WTC11 (cell line): ENCODE measurements at regions of chr5 and their contacts with region 1.

Region 1: GRCh38 chr5:71475788-71476384 is 20.4 kb downstream of the BDP1 start:
- DNase-seq: no peak
- ATAC-seq: peak; percentile 87
- H3K4me3 Mint-ChIP-seq: no peak overlapping the region
- H3K27ac Mint-ChIP-seq: peak overlapping the region; percentile 31
- H3K4me1 Mint-ChIP-seq: no peaks in the 10 kb centered on the region
- H3K27me3 Mint-ChIP-seq: no peaks in the 10 kb centered on the region
- CTCF ChIP-seq: peak; percentile 51; the same call in 1 of the 2 replicates

Region 2: GRCh38 chr5:71461360-71461759 is 14.5 kb before region 1 on chr5:
- CTCF ChIA-PET with region 1: interaction called, 11 read pairs
- POLR2A ChIA-PET with region 1: no interaction called
- DNase-seq: no peak
- ATAC-seq: no peak
- H3K4me3 Mint-ChIP-seq: no peak overlapping the region
- H3K27ac Mint-ChIP-seq: no peak overlapping the region
- H3K4me1 Mint-ChIP-seq: peaks cover 7% of the 10 kb centered on the region
- H3K27me3 Mint-ChIP-seq: no peaks in the 10 kb centered on the region
- CTCF ChIP-seq: no peak

Region 3: GRCh38 chr5:71573592-71573991 is 97.7 kb after region 1 on chr5:
- CTCF ChIA-PET with region 1: no interaction called
- POLR2A ChIA-PET with region 1: no interaction called
- DNase-seq: no peak
- ATAC-seq: no peak
- H3K4me3 Mint-ChIP-seq: no peak overlapping the region
- H3K27ac Mint-ChIP-seq: no peak overlapping the region
- H3K4me1 Mint-ChIP-seq: peaks cover 10% of the 10 kb centered on the region
- H3K27me3 Mint-ChIP-seq: 0 out of 2 replicates have a peak, but pooled peaks cover 3% of the 10 kb centered on the region
- CTCF ChIP-seq: no peak